GM13977 (cell line): ENCODE measurements at regions of chr2 and their contacts with region 1.

Region 1: GRCh38 chr2:106085181-106085940 is 108.7 kb downstream of the UXS1 start:
- DNase-seq: peak; percentile 40
- CTCF ChIP-seq: peak; percentile 45

Region 2: GRCh38 chr2:105576440-105577252 is 508.7 kb before region 1 on chr2:
- in situ Hi-C with region 1: loop called (anchors 25 kb)
- DNase-seq: peak; percentile 59
- CTCF ChIP-seq: peak; percentile 63

Region 3: GRCh38 chr2:106899786-106900530 is 814.6 kb after region 1 on chr2:
- in situ Hi-C with region 1: no loop called
- DNase-seq: no peak
- CTCF ChIP-seq: no peak